Mammary epithelial cell (primary cell): ENCODE measurements at regions of chr5 and their contacts with region 1.

Region 1: DNA sequence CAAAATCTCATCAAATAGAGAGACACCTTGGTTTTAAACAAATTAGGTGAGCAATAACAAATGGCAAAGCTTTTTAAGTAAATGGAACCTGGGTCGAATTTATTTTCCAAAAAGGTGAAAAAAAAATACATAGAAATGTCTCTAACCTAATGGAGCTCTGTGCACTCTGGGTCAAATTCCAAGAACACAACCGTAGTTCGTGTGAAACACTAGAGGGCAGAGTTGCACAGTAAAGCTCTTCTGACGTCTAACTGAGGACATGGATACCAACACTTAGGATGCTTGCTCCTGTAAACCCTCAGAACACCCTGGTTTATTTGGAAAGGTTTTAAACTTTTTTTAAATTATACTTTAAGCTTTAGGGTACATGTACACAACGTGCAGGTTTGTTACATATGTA is 18.9 kb downstream of the MARCHF11 start:
- DNase-seq: peak; percentile 41
- H3K4me3 ChIP-seq: no peak overlapping the region
- H3K27ac ChIP-seq: no peak overlapping the region
- H3K4me1 ChIP-seq: no peaks in the 10 kb centered on the region
- H3K27me3 ChIP-seq: no peaks in the 10 kb centered on the region
- CTCF ChIP-seq: peak; percentile 71 to 85

Region 2: DNA sequence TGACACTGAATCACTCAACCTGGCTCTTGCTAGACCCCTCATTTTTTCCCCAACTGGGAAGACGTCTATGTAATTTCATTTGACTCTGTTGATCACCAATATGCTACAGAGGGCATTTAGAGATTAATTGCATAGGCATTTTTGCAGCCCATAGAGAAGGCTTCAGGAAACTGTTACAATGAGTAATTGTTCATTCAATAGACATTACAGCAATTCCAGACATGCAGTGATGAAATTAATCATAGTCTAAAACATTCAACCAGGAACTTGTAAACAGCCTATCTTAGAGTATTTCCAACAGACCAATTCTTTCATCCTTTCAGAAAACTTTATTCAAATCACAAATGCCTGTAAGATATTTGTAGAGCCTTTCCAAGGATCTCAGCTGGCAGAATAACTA is 103.4 kb before region 1 on chr5:
- CTCF ChIA-PET with region 1: no interaction called
- dilution Hi-C with region 1: no loop called
- in situ Hi-C with region 1: no loop called
- intact Hi-C with region 1: no loop called
- DNase-seq: peak; percentile 48
- H3K4me3 ChIP-seq: no peak overlapping the region
- H3K27ac ChIP-seq: no peak overlapping the region
- H3K4me1 ChIP-seq: peaks cover 7% of the 10 kb centered on the region
- H3K27me3 ChIP-seq: no peaks in the 10 kb centered on the region
- CTCF ChIP-seq: no peak

Region 3: DNA sequence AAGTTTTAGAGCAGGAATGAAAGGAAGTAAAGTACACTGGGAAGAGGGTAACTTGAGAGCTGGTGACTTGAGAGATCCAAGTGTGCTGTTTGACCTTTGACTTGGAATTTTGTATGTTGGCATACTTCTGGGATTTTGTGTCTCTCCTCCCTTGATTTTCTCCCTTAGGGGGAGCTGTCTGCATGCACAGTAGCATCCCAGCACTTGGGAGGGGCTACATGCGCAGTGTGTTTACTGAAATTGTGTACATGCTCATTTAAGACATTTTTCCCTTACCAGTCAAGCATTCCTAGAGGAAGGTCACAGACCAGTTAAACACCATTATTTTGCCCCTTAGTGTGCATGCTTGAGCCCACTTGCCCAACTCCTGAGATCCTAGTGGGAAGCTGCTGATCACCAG is 184.7 kb after region 1 on chr5:
- CTCF ChIA-PET with region 1: no interaction called
- dilution Hi-C with region 1: no loop called
- in situ Hi-C with region 1: no loop called
- intact Hi-C with region 1: loop called (anchors 1 kb)
- DNase-seq: no peak
- H3K4me3 ChIP-seq: no peak overlapping the region
- H3K27ac ChIP-seq: no peak overlapping the region
- H3K4me1 ChIP-seq: no peaks in the 10 kb centered on the region
- H3K27me3 ChIP-seq: no peaks in the 10 kb centered on the region
- CTCF ChIP-seq: peak; percentile 22 to 48

Region 4: DNA sequence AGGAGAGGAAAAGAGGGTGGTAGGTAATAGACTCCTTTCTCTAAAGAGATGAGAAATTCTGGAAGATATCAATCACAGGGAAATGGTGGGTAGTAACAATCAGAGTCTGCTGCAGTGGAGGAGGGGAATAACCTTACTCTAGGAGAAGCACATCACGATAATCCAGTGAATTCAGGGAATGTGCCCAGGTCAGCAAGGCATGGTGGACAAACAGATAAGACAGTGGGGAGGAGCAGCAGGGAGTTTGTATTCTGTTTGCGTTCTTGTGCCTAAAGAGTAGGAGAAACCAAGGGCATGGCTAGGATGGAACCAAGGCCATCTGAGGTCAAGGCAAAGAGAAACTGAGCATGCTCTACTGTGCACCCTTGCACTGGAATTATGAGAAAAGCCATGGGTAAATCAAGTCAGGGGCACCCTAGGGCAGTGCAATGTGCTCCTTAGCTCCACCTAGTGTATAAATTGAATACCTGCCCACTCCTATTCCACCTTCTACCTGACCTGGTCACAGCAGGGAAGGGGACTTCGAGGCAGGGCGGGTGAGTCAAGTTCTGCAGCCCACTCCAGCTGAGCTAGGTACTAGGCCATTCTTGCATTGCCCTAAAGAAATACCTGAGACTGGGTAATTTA is 424.4 kb after region 1 on chr5:
- CTCF ChIA-PET with region 1: no interaction called
- dilution Hi-C with region 1: no loop called
- in situ Hi-C with region 1: no loop called
- intact Hi-C with region 1: no loop called
- DNase-seq: no peak
- H3K4me3 ChIP-seq: no peak overlapping the region
- H3K27ac ChIP-seq: no peak overlapping the region
- H3K4me1 ChIP-seq: peaks cover 6% of the 10 kb centered on the region
- H3K27me3 ChIP-seq: no peaks in the 10 kb centered on the region
- CTCF ChIP-seq: peak; percentile 66 to 72